ENCODE measurements at regions of chr18 and their contacts with region 1.

Region 1: GRCh38 chr18:62584241-62585120 is 61.7 kb downstream of the ZCCHC2 start:
- DNase-seq: peak; percentile 51 to 90
- H3K4me3 ChIP-seq: peak overlapping the region in 1 of 2 donors; percentile 42
- H3K27ac ChIP-seq: peak overlapping the region in 1 of 2 donors; percentile 59
- H3K4me1 ChIP-seq: peaks cover 0 to 4% of the 10 kb centered on the region in 2 donors
- H3K27me3 ChIP-seq: no peaks in the 10 kb centered on the region
- CTCF ChIP-seq: peak; percentile 92 to 95 (median 93)

Region 2: GRCh38 chr18:62325806-62326645 is 258.5 kb before region 1 on chr18:
- intact Hi-C with region 1: loop called (anchors 2 kb)
- DNase-seq: no peak
- H3K4me3 ChIP-seq: peak overlapping the region; percentile 51 to 64
- H3K27ac ChIP-seq: no peak overlapping the region
- H3K4me1 ChIP-seq: peaks cover 6 to 26% of the 10 kb centered on the region in 2 donors
- H3K27me3 ChIP-seq: peaks cover 3% of the 10 kb centered on the region
- CTCF ChIP-seq: no peak

Region 3: DNA sequence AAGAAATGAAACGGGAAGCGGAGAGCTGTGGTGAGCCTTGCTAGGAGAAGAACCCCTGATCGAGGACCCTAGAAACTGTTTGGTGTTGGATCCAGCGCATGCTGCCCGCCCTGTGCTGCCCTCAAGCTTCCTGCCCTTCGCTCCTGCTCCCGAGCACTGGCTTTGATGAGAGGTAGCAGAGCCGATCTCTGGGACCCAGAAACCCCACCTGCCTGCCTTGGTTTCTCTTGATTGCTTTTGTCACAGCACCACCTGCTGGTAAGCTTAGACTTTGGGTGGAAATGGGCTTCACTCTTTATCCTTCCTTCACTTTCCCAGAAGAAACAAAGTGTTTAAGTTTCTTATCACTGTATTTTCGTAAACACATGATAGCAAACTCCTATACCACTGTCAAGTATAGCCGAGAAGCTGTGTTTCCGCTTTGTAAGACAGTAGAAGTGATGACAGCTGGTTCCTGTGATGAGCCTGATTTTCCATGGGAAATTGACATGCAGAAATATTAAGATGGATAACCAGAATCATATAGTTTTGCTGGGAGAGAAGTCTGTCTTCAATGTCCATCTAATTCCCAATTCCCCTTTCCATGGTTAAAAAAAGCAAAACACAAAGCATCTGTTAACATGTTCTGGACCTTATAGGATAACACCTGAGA is 398.2 kb after region 1 on chr18:
- intact Hi-C with region 1: loop called (anchors 2 kb)
- DNase-seq: no peak
- H3K4me3 ChIP-seq: peak overlapping the region in 1 of 2 donors; percentile 57
- H3K27ac ChIP-seq: no peak overlapping the region
- H3K4me1 ChIP-seq: no peaks in the 10 kb centered on the region
- H3K27me3 ChIP-seq: no peaks in the 10 kb centered on the region
- CTCF ChIP-seq: peak; percentile 65 to 78 (median 68)